ENCODE measurements at regions of chr1 and their contacts with region 1.

Region 1: GRCh38 chr1:227437495-227438008 is 119.3 kb upstream of the CDC42BPA start:
- DNase-seq: no peak
- ATAC-seq: peak; percentile 87 to 90
- H3K4me3 ChIP-seq: peak overlapping the region; percentile 46 to 61 (median 52)
- H3K27ac ChIP-seq: peak overlapping the region in 2 of 4 donors; percentile 11 to 59
- H3K4me1 ChIP-seq: peaks cover 11 to 27% of the 10 kb centered on the region in 2 donors
- H3K27me3 ChIP-seq: no peaks in the 10 kb centered on the region
- CTCF ChIP-seq: peak; percentile 9 to 55 (median 45)
- POLR2A ChIP-seq: no peak

Region 2: DNA sequence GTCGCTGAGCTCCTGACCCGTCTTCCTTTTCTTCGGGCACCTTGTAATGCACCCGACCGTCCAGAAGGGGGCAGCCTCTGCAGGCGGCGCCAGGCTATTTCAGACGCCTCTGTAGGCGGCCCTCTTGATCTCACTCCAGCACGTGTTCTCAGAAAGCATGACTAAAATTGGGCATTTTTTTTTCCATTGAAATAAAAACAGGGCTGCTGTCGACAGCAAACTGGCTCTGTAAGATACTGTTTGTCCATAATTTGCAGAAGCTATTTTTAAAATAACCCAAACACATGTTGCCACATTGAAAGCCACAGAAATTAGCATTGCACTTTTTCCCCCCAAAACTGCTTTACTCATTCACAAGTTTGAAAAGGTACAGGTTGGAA is 811.0 kb before region 1 on chr1:
- in situ Hi-C with region 1: loop called in 2 of 4 experiments (anchors 25 kb)
- intact Hi-C with region 1: loop called (anchors 5 kb)
- DNase-seq: peak; percentile 59 to 68
- ATAC-seq: peak; percentile 73 to 82
- H3K4me3 ChIP-seq: no peak overlapping the region
- H3K27ac ChIP-seq: peak overlapping the region in 3 of 4 donors; percentile 20 to 38 (median 32)
- H3K4me1 ChIP-seq: peaks cover 0 to 5% of the 10 kb centered on the region in 2 donors
- H3K27me3 ChIP-seq: no peaks in the 10 kb centered on the region
- CTCF ChIP-seq: peak; percentile 87 to 96 (median 91)
- POLR2A ChIP-seq: no peak

Region 3: DNA sequence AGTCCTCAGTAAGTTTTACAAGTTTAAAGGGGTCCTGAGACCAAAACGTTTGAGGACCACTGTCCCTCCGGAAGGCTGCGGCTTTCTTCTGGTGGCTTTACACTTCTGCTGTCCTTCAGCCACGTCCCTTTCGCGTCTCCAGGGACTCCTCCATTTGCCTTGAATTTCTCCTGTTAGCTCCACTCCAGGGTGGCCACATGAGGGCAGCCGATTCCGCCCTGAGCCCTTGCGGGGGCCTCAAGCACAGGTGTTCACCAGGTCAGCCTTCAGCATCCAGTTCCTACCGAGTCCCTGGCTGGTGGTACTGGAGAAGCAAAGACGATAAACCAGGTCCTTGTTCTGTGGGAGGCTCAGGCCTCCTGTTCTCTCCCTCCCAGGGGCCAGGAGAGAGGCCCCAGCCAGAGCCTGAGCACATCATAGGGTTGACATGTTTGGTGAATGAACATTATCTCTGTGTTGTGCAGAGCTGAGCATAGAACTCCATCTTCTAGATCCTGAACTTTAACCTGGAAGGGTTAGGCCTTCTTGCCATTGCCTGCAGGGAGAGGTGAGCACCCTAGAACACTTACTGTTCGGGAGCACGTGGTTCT is 524.9 kb before region 1 on chr1:
- in situ Hi-C with region 1: loop called (anchors 25 kb)
- intact Hi-C with region 1: loop called (anchors 5 kb)
- DNase-seq: peak; percentile 65 to 83
- ATAC-seq: peak; percentile 63 to 93
- H3K4me3 ChIP-seq: no peak overlapping the region
- H3K27ac ChIP-seq: peak overlapping the region in 3 of 4 donors; percentile 38 to 84 (median 39)
- H3K4me1 ChIP-seq: peaks cover 0 to 31% of the 10 kb centered on the region in 2 donors
- H3K27me3 ChIP-seq: no peaks in the 10 kb centered on the region
- CTCF ChIP-seq: peak; percentile 66 to 87 (median 81)
- POLR2A ChIP-seq: no peak

Region 4: GRCh38 chr1:227131193-227131592 is 306.4 kb before region 1 on chr1:
- in situ Hi-C with region 1: loop called in 3 of 4 experiments (anchors 25 kb)
- intact Hi-C with region 1: loop called (anchors 5 kb)
- DNase-seq: no peak
- ATAC-seq: no peak
- H3K4me3 ChIP-seq: no peak overlapping the region
- H3K27ac ChIP-seq: no peak overlapping the region
- H3K4me1 ChIP-seq: no peaks in the 10 kb centered on the region
- H3K27me3 ChIP-seq: no peaks in the 10 kb centered on the region
- CTCF ChIP-seq: peak in 4 of 5 experiments; percentile 14 to 45 (median 20)
- POLR2A ChIP-seq: no peak

Region 5: GRCh38 chr1:227245613-227246320 is 191.8 kb before region 1 on chr1:
- in situ Hi-C with region 1: loop called in 2 of 4 experiments (anchors 10 to 25 kb)
- intact Hi-C with region 1: no loop called
- DNase-seq: no peak
- ATAC-seq: no peak
- H3K4me3 ChIP-seq: no peak overlapping the region
- H3K27ac ChIP-seq: no peak overlapping the region
- H3K4me1 ChIP-seq: peaks cover 22 to 35% of the 10 kb centered on the region in 2 donors
- H3K27me3 ChIP-seq: no peaks in the 10 kb centered on the region
- CTCF ChIP-seq: no peak
- POLR2A ChIP-seq: no peak

Region 6: DNA sequence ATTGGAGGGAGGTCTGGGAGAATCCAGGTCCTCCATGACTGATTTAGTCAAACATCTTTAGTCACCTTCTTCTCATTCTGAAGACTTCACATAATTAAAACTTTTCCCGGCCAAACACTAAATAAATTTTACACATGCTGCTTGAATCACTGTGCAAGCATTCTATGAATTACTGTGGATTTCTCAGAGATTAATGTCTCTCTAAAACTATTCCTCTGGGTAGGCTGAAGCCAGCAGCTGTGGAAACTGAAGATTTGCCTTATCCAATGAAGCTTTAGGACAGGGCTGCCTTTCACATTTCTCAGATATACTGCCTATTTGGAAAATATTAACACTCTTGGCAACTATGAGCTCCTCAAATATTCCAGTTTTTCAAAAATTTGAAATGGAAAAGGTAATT is 235.9 kb after region 1 on chr1:
- in situ Hi-C with region 1: no loop called
- intact Hi-C with region 1: no loop called
- DNase-seq: no peak
- ATAC-seq: no peak
- H3K4me3 ChIP-seq: no peak overlapping the region
- H3K27ac ChIP-seq: no peak overlapping the region
- H3K4me1 ChIP-seq: no peaks in the 10 kb centered on the region
- H3K27me3 ChIP-seq: no peaks in the 10 kb centered on the region
- CTCF ChIP-seq: no peak
- POLR2A ChIP-seq: no peak